ENCODE measurements at regions of chr1 and their contacts with region 1.

Region 1: GRCh38 chr1:226121587-226122400 is 59.3 kb downstream of the H3-3A start:
- DNase-seq: peak; percentile 79
- H3K4me3 Mint-ChIP-seq: peak overlapping the region; percentile 69
- H3K27ac Mint-ChIP-seq: peak overlapping the region; percentile 84
- H3K4me1 Mint-ChIP-seq: peaks cover 46% of the 10 kb centered on the region
- H3K27me3 Mint-ChIP-seq: peaks cover 4% of the 10 kb centered on the region

Region 2: DNA sequence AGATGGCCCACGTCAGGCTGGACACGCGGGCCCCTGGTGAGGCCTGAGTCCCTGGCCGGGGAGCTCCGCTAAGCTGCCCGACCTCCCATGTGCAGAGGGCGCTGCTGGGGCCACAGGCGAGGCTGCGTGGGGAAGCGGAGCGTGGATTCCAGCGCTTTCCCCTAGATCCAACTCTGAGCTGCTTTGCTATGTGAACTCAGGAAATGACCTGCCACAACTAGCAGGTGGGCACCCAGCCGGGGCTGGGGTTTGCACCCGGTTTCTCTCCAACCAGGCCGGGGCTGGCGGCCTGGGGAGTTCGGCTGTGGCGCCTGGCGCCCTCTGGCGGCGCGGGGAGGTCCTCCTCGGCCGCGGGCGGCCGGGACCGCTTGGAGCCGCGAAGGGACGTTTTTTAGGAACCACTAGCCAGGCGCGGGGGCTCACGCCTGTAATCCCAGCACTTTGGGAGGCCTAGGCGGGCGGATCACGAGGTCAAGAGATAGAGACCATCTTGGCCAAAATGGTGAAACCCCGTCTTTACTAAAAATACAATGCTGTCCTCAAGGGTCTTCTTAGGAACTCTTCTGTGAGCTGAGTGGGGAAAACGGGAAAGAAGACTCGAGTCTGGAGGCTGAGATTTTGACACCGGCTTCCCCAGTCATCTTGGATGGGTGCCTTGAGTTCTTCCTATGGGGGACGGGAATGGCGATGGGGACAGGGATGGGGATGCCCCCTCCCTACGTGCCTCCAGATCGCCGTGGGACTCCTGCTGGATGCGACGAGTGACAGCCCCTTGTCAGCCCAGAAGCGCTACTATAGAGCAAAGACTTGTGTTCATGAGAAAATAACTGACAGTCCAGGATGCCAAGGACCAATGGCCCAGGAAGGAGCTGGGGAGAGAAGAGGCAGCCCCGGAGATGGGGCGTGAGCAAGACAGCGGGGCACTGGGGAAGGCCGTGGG is 210.3 kb before region 1 on chr1:
- CTCF ChIA-PET with region 1: no interaction called
- POLR2A ChIA-PET with region 1: no interaction called
- DNase-seq: peak; percentile 74
- H3K4me3 Mint-ChIP-seq: no peak overlapping the region
- H3K27ac Mint-ChIP-seq: no peak overlapping the region
- H3K4me1 Mint-ChIP-seq: peaks cover 4% of the 10 kb centered on the region
- H3K27me3 Mint-ChIP-seq: peaks cover 6% of the 10 kb centered on the region

Region 3: DNA sequence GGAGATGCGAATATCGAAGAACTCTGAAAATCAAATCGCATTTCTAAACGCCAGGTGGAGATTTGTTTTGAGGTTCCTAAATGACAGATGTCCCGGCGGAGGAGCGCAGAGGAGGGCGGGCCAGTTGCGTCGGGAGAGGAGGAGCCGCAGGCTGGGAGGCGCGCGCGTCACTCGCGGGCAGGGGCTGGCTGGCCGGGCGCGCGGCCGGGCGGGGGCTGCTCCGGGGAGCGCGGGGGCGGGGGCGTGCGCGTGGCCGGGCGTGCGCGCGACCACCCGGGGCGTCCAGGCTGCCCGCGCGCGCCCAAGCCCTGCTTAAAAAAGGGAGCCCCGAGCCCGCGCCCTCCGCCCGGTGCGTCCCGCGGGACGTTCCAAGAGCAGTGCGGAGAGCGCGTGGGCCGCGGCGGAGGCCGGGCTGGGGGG is 12.0 kb before region 1 on chr1:
- CTCF ChIA-PET with region 1: interaction called, 24 read pairs
- POLR2A ChIA-PET with region 1: interaction called, 87 read pairs
- DNase-seq: peak; percentile 84
- H3K4me3 Mint-ChIP-seq: peak overlapping the region; percentile 87
- H3K27ac Mint-ChIP-seq: peak overlapping the region; percentile 78
- H3K4me1 Mint-ChIP-seq: peaks cover 19% of the 10 kb centered on the region
- H3K27me3 Mint-ChIP-seq: no peaks in the 10 kb centered on the region

Region 4: DNA sequence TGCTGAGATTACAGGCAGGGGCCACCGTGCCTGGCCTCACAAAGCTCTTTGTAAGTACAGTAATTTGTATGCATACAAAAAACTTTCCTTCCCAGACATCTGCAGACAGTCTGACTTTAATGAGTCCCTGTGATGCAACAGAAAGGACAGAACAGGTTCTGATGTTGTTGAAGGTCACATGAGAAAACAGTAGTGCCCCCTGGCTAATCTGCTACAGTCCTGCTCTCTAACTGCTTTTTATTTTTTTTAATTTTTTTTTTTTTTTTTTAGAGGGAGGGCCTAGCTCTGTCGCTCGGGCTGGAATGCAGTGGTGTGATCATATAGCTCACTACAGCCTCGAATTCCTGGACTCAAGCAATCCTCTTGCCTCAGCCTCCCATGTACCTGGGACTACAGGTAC is 28.0 kb after region 1 on chr1:
- CTCF ChIA-PET with region 1: interaction called, 23 read pairs
- POLR2A ChIA-PET with region 1: interaction called, 3 read pairs
- DNase-seq: no peak
- H3K4me3 Mint-ChIP-seq: no peak overlapping the region
- H3K27ac Mint-ChIP-seq: no peak overlapping the region
- H3K4me1 Mint-ChIP-seq: peaks cover 8% of the 10 kb centered on the region
- H3K27me3 Mint-ChIP-seq: no peaks in the 10 kb centered on the region

Region 5: GRCh38 chr1:226172589-226172988 is 50.8 kb after region 1 on chr1:
- CTCF ChIA-PET with region 1: interaction called, 12 read pairs
- POLR2A ChIA-PET with region 1: no interaction called
- DNase-seq: no peak
- H3K4me3 Mint-ChIP-seq: no peak overlapping the region
- H3K27ac Mint-ChIP-seq: no peak overlapping the region
- H3K4me1 Mint-ChIP-seq: peaks cover 11% of the 10 kb centered on the region
- H3K27me3 Mint-ChIP-seq: no peaks in the 10 kb centered on the region

Region 6: DNA sequence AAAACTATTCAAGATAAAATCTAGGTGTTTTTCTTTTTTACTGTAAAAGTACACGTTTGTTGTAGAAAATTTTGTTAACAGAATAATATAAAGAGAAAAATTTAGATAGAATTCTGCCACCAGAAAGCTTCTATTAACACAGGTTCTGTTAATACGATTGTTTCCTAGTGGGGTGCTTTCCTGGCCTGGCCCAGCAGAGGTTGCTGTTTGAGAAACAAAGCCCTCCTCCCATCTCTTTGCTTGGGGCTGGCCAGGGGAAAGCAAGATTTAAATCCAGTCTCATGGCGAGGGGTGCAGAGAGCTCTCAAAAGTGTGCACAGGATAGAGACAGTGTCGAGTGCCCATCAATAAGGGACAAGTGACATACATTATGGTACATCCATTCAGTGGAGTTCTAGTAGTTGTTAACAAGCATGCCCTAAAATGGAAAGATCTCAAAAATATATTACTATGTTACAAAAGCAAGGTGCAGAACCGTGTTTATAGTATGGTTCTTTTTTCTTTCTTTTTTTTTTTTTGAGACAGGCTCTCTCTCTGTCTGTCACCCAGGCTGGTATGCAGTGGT is 79.3 kb after region 1 on chr1:
- CTCF ChIA-PET with region 1: interaction called, 228 read pairs
- POLR2A ChIA-PET with region 1: interaction called, 7 read pairs
- DNase-seq: no peak
- H3K4me3 Mint-ChIP-seq: no peak overlapping the region
- H3K27ac Mint-ChIP-seq: no peak overlapping the region
- H3K4me1 Mint-ChIP-seq: peaks cover 3% of the 10 kb centered on the region
- H3K27me3 Mint-ChIP-seq: peaks cover 12% of the 10 kb centered on the region

Region 7: DNA sequence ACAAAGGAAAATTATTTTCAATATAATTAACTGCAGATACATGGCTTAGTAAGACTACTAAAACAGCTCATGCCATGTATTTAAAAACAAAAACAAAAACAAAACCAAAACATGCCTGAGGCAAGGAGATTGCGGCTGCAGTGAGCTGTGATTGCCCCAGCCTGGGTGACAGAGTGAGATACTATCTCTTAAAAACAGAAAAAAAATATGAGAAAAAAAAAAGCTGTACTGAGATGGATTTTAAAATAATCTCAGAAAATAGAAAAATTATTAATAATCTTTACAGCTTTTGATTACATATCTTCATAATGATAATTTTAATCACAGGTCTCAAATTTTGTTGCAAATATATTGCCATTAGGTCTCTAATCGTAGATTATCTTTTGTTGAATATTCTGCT is 211.2 kb after region 1 on chr1:
- CTCF ChIA-PET with region 1: interaction called, 83 read pairs
- POLR2A ChIA-PET with region 1: interaction called, 3 read pairs
- DNase-seq: peak; percentile 21
- H3K4me3 Mint-ChIP-seq: peak overlapping the region; percentile 3
- H3K27ac Mint-ChIP-seq: no peak overlapping the region
- H3K4me1 Mint-ChIP-seq: peaks cover 20% of the 10 kb centered on the region
- H3K27me3 Mint-ChIP-seq: no peaks in the 10 kb centered on the region

Measured in activated CD4-positive, alpha-beta memory T cell treated with anti-CD3 and anti-CD28 coated beads, Interleukin-2, amount 10 ng/mL, durations not matched to agents 7 days and 5 days (primary cell).